MCF 10A (cell line): ENCODE measurements at regions of chr3 and their contacts with region 1.

Region 1: DNA sequence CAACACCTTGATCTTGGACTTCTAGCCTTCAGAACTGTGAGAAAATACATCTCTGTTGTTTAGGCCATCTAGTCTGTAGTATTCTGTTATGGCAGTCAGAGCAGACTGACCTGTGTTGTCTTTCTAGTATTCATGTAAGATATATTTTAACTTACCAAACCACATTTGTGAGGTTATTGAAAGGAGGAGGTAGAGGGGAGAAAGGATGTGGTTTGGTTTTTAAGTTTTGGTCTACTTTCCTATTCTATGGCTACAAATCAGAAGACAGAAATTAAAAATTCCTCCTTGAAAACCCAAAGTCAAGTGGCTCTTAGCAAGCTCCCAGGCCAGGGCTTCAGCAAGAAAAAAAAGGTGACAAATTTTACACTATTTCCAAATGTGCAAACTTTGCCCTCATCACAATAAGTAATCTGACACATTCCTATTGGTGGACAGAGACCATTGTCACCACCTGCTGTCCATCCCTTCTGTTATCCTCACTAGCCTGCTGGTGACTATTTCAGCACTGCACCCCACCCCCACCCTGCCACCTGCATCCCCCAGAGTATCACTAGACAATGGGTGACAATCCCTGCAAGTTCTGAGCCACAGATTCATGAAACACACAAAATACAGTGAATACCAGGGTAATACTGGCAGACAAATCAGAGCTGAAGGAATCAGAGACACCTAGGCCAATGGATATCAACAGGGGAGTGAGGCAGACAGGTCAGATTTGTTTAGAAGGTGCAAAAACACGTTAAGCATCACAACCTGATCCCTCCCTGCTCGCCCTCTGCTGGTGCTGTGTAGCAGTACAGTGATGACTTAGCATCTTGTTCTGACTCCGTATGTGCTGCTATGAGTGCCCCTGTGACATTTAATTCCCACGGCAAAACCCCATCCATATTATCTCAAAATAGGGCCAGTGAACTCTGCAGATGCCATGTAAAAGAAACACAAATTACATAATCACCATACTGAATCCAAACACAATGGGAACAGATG is 79.0 kb upstream of the DCLK3 start:
- DNase-seq: peak; percentile 51
- H3K4me3 Mint-ChIP-seq: no peak overlapping the region
- H3K27ac Mint-ChIP-seq: no peak overlapping the region
- H3K4me1 Mint-ChIP-seq: no peaks in the 10 kb centered on the region
- H3K27me3 Mint-ChIP-seq: no peaks in the 10 kb centered on the region
- CTCF ChIP-seq: peak; percentile 46

Region 2: DNA sequence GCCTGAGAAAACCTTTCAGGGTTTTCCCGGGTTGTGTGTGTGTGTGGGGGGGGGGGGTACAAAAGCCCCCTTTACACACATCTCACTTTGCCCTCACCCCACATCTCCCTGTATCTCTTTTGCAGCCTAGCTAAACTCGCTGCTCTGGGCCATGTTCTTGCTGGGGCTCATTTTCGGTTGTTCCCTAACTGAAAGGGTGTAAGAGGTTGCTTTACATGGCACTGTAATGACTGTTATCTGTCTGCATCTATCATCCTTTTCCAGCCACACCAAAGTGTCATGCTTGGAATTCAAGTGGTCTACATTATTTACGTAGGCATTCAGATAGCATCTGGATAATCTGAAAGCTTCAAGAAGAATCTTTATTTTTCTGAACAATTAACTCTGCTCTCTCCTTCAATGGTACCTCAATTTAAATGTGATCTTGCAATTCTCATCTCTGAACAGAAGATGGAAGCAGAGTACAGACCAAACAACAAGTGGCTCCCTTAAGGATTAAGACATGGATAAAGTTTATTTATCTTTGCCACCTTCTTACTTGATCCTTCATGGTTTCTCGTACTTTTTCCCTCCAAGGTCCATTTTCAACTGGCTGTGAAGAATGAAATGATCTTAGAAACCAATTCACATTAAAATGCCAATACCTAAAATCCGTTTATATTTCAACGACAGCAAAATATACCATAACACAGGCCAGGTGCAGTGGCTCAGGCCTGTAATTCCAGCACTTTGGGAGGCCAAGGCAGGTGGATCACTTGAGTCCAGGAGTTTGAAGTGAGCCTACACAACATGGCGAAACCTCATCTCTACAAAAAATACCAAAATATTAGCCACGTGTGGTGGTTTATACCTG is 113.9 kb before region 1 on chr3:
- CTCF ChIA-PET with region 1: interaction called, 15 read pairs
- POLR2A ChIA-PET with region 1: no interaction called
- intact Hi-C with region 1: no loop called
- DNase-seq: peak; percentile 64
- H3K4me3 Mint-ChIP-seq: no peak overlapping the region
- H3K27ac Mint-ChIP-seq: no peak overlapping the region
- H3K4me1 Mint-ChIP-seq: no peaks in the 10 kb centered on the region
- H3K27me3 Mint-ChIP-seq: peaks cover 21% of the 10 kb centered on the region
- CTCF ChIP-seq: peak; percentile 72

Region 3: GRCh38 chr3:36734742-36735141 is 108.6 kb before region 1 on chr3:
- CTCF ChIA-PET with region 1: interaction called, 15 read pairs
- POLR2A ChIA-PET with region 1: no interaction called
- intact Hi-C with region 1: no loop called
- DNase-seq: no peak
- H3K4me3 Mint-ChIP-seq: no peak overlapping the region
- H3K27ac Mint-ChIP-seq: no peak overlapping the region
- H3K4me1 Mint-ChIP-seq: no peaks in the 10 kb centered on the region
- H3K27me3 Mint-ChIP-seq: peaks cover 10% of the 10 kb centered on the region
- CTCF ChIP-seq: no peak

Region 4: GRCh38 chr3:36792342-36792741 is 51.0 kb before region 1 on chr3:
- CTCF ChIA-PET with region 1: interaction called, 9 read pairs
- POLR2A ChIA-PET with region 1: interaction called, 3 read pairs
- intact Hi-C with region 1: loop called (anchors 2 kb)
- DNase-seq: peak; percentile 51
- H3K4me3 Mint-ChIP-seq: no peak overlapping the region
- H3K27ac Mint-ChIP-seq: no peak overlapping the region
- H3K4me1 Mint-ChIP-seq: no peaks in the 10 kb centered on the region
- H3K27me3 Mint-ChIP-seq: peaks cover 26% of the 10 kb centered on the region
- CTCF ChIP-seq: peak; percentile 53

Region 5: DNA sequence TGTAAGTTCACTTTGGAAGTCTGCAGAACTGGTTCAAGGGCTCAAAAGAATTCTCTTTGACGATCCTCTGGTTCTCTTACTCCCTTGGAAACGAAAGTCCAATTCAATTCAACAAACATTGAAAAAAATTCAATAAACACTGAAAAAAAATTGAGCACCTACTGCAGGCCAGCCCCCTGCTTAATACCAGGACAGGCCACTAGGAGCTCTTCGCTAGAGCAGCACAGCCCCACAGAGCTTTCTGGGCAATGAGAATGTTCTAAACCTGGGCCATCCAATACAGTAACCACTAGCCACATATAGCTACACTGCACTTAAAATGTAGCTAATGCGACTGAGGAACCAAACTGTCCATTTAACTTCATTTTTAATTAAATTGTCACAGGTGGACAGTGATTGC is 28.6 kb before region 1 on chr3:
- CTCF ChIA-PET with region 1: interaction called, 14 read pairs
- POLR2A ChIA-PET with region 1: no interaction called
- intact Hi-C with region 1: no loop called
- DNase-seq: no peak
- H3K4me3 Mint-ChIP-seq: no peak overlapping the region
- H3K27ac Mint-ChIP-seq: no peak overlapping the region
- H3K4me1 Mint-ChIP-seq: peaks cover 11% of the 10 kb centered on the region
- H3K27me3 Mint-ChIP-seq: no peaks in the 10 kb centered on the region
- CTCF ChIP-seq: no peak

Region 6: DNA sequence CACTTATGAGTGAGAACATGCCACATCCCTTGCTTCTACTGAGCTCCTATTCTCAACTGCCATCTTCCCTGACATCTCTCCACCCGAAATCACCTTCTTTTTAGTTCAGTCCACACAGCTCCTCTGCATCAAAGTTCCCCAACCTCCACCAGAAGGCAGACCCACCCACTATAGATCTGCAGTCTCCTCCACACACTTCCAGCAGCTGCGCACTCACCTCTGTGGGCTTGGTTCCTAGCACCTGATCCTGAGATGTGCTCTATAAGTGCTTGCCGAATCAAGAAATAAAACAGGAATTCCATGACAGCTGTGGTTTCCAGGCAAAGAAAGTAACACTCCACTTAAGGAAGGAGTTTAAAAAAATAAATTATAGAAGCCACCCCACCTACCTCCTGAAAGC is 16.1 kb after region 1 on chr3:
- CTCF ChIA-PET with region 1: interaction called, 18 read pairs
- POLR2A ChIA-PET with region 1: no interaction called
- intact Hi-C with region 1: no loop called
- DNase-seq: no peak
- H3K4me3 Mint-ChIP-seq: no peak overlapping the region
- H3K27ac Mint-ChIP-seq: peak overlapping the region; percentile 75
- H3K4me1 Mint-ChIP-seq: no peaks in the 10 kb centered on the region
- H3K27me3 Mint-ChIP-seq: no peaks in the 10 kb centered on the region
- CTCF ChIP-seq: no peak